ENCODE measurements at regions of chr5 and their contacts with region 1.

Region 1: GRCh38 chr5:132094393-132095076 is 20.9 kb downstream of the CSF2 start:
- DNase-seq: peak; percentile 95
- ATAC-seq: peak; percentile 82
- H3K4me3 ChIP-seq: 0 out of 2 replicates have a peak overlapping the region, but pooled peaks have one; percentile 7
- H3K27ac ChIP-seq: peak overlapping the region; percentile 93
- H3K4me1 ChIP-seq: peaks cover 50% of the 10 kb centered on the region
- H3K27me3 ChIP-seq: no peaks in the 10 kb centered on the region
- CTCF ChIP-seq: no peak

Region 2: DNA sequence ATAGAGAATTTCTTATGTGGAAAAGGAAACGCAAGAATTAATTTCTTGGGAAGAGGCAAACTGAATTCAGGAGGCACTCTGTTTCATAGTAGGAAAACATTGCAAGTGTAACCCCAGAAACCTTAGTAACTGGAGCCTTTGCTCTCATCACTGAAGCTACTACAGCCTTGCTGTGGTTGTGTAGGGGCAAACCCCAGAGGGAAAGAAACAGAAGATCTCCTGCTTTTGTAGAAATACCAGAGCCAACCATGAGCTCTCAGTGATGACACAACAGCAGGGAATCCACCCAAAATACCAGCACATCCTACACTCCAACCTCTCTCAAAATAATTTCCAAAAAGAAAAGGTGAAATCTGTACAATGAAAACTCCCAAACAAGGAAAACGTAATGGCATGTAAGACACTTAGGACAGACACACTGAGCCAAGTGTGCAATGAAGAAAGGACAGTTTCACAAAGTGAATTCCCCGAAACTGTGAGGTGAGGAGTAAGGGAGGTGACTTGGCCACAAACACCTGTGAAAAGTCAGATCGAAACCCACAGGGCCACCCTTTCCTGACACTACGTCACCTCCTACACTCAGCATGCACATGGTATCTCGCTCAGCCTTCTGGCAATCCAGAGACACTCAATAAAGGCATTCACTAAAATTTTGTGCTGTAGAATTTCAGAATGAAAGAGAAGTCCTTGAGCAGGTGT is 74.5 kb before region 1 on chr5:
- CTCF ChIA-PET with region 1: no interaction called
- POLR2A ChIA-PET with region 1: no interaction called
- intact Hi-C with region 1: no loop called
- DNase-seq: no peak
- ATAC-seq: no peak
- H3K4me3 ChIP-seq: no peak overlapping the region
- H3K27ac ChIP-seq: no peak overlapping the region
- H3K4me1 ChIP-seq: peaks cover 9% of the 10 kb centered on the region; the same call in 1 of the 2 replicates
- H3K27me3 ChIP-seq: no peaks in the 10 kb centered on the region
- CTCF ChIP-seq: no peak

Region 3: DNA sequence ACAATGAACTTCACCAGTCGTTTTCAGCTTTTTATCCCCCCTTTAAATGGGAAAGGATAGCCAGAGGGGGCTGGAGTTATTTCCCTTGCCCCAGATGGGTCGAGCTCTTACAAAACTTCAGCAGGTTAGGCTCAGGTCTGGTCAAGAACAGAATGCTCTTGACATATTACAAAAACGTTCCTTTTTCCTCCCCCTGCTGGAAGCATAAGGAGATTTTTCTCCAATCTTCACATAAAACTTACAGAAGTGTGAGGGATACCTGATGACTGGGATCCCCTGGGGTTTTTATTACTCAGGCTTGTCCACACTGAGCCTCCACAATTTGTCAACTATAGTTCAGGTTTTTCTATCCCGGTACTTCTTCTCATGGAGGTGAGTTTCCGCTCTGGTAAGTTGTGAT is 39.8 kb after region 1 on chr5:
- CTCF ChIA-PET with region 1: interaction called, 3 read pairs
- POLR2A ChIA-PET with region 1: interaction called, 3 read pairs
- intact Hi-C with region 1: loop called (anchors 1 kb)
- DNase-seq: peak; percentile 59
- ATAC-seq: peak; percentile 58
- H3K4me3 ChIP-seq: no peak overlapping the region
- H3K27ac ChIP-seq: no peak overlapping the region
- H3K4me1 ChIP-seq: no peaks in the 10 kb centered on the region; the same call in 1 of the 2 replicates
- H3K27me3 ChIP-seq: no peaks in the 10 kb centered on the region
- CTCF ChIP-seq: peak; percentile 60

Measured in PC-3 (cell line).